Lower leg skin (tissue), 4 donors: ENCODE measurements at regions of chr6 and their contacts with region 1.

Region 1: DNA sequence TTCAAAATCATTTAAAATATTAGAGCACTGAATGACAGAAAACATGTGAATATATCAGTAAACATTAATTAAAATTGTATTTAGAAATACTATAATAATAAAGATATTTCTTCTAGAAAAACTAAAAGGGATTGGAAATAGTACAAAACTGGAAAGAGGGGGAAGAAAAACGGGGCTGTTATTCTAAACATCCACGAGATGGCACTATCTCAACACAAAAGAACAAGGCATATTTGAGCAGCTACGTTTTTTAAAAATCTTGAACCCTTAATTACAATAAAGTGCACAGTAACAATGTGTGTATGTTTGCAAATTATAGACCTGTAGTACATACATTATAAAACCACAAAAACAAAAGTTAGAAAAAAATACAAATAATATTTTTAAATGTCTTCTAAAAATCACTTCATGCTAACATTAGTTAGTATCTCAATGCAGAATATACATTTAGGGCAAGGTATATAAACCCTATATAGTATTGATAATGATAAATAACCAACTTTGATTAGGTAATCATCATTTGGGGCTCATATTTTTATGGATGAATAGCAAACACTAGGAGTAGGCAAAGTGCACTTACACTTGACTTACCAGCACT is 42.5 kb upstream of the PNISR start:
- DNase-seq: no peak
- H3K4me3 ChIP-seq: no peak overlapping the region
- CTCF ChIP-seq: no peak
- POLR2A ChIP-seq: no peak

Region 2: GRCh38 chr6:99425647-99426453 is 41.8 kb before region 1 on chr6:
- intact Hi-C with region 1: no loop called
- DNase-seq: peak; percentile 85 to 94
- H3K4me3 ChIP-seq: peak overlapping the region; percentile 75
- CTCF ChIP-seq: no peak
- POLR2A ChIP-seq: no peak

Region 3: GRCh38 chr6:99745651-99746050 is 278.0 kb after region 1 on chr6:
- intact Hi-C with region 1: loop called (anchors 2 kb)
- DNase-seq: no peak
- H3K4me3 ChIP-seq: no peak overlapping the region
- CTCF ChIP-seq: no peak
- POLR2A ChIP-seq: no peak